ENCODE measurements at regions of chr1 and their contacts with region 1.

Region 1: DNA sequence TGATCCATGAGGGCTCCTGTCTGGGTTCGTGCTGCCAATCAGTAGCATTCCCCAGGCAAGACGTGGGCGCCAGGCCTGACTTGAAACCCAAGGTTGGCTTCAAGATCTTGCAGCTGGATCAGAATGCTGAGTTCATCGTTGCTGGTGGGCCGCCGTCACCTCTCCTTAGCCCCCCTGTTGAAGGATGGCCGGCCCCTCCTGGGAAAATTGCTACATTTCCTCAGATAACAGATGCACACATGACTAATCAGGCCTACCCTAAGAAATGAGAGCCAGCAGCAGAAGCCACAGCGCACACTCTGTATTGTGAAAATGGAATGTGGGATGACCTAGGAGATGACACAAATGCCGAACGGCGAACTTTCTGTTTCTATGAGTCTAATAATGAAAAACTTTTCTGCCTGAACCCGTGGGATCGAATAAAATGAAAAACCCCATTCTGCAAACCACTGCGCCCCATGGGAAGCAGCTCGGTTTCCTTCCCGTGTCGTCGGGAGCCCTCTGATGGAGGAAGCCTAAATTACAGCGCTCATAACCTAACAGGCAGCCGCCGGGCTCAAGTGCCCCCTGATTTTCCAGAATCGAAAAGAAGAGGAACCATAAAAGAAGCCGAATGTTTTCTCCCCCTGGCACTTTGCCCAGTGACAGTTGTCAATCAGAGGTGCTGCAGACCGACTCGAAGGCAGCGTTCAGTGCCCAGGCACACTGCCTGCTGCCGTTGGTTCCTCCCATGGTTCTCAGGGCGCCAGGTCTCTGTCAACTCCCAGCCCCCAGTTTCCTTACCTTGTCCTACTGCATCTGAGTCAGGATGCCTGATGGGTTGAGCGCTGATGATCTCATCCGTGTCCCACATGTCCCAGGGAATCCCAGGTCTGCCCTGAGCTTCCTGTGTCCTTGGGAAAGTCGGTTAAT is 38.2 kb upstream of the H6PD start:
- DNase-seq: peak; percentile 74 to 93 (median 86)
- H3K4me3 ChIP-seq: peak overlapping the region in 1 of 4 donors; percentile 33
- H3K27ac ChIP-seq: peak overlapping the region; percentile 66 to 95 (median 89)
- H3K4me1 ChIP-seq: peaks cover 34% of the 10 kb centered on the region in 2 donors
- H3K27me3 ChIP-seq: peaks cover 8% of the 10 kb centered on the region
- CTCF ChIP-seq: peak; percentile 45 to 84 (median 71)
- POLR2A ChIP-seq: peak in 1 of 2 donors; percentile 32

Region 2: GRCh38 chr1:9110669-9111356 is 85.6 kb before region 1 on chr1:
- intact Hi-C with region 1: loop called in 1 of 2 experiments (anchors 5 kb)
- DNase-seq: peak; percentile 89 to 98 (median 97)
- H3K4me3 ChIP-seq: no peak overlapping the region
- H3K27ac ChIP-seq: peak overlapping the region in 2 of 5 donors; percentile 10 to 61
- H3K4me1 ChIP-seq: peaks cover 5 to 6% of the 10 kb centered on the region in 2 donors
- H3K27me3 ChIP-seq: no peaks in the 10 kb centered on the region
- CTCF ChIP-seq: peak; percentile 94 to 97 (median 96)
- POLR2A ChIP-seq: no peak

Measured in adrenal gland (tissue), 19 donors.